ENCODE measurements at regions of chr21 and their contacts with region 1.

Region 1: DNA sequence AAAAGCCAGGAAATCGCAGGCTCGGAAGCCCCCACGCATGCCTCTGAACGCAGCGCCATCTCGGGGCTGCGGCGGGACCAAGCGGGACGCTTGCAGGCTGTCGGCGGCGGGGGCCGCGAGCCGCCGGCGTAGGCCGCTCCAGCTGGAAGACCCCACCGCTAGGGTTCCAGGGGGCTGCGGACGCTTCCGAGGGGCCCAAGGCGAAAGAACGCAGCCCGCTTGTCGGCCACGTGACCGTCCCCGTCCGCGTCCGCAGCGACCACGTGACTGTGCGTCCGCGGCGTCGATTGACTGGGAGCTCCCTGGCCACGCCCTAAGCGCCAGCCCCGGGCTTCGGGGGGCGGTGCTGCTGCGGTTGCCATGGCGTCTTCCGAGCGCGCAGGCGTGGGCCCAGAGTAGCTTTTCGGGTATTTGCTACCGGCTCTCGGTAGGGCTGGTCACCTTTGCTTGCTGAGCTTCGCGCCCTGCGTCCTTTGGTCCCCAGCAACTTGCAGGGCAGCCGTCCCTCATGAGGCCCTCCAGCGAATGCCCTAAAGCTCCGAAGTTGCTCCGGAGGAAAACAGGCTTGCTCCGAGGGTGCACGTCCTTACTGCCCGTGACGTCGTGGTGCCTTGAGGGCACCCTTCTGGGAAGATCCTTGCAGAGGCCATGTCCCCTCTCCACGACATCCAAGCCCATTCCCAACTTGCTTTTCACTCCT is 197.2 kb downstream of the DYRK1A start:
- DNase-seq: peak; percentile 86 to 94 (median 91)
- ATAC-seq: peak; percentile 93
- H3K4me3 ChIP-seq: peak overlapping the region; percentile 99
- H3K4me3 Mint-ChIP-seq: peak overlapping the region; percentile 93 to 100 (median 97)
- H3K27ac ChIP-seq: peak overlapping the region; percentile 82
- H3K27ac Mint-ChIP-seq: peak overlapping the region; percentile 97 to 100 (median 99)
- H3K4me1 ChIP-seq: peaks cover 11 to 17% of the 10 kb centered on the region in 2 donors
- H3K4me1 Mint-ChIP-seq: peaks cover 0 to 32% (median 17%) of the 10 kb centered on the region in 7 donors
- H3K27me3 ChIP-seq: no peaks in the 10 kb centered on the region
- H3K27me3 Mint-ChIP-seq: peaks cover 0 to 8% (median 2%) of the 10 kb centered on the region in 5 donors

Region 2: DNA sequence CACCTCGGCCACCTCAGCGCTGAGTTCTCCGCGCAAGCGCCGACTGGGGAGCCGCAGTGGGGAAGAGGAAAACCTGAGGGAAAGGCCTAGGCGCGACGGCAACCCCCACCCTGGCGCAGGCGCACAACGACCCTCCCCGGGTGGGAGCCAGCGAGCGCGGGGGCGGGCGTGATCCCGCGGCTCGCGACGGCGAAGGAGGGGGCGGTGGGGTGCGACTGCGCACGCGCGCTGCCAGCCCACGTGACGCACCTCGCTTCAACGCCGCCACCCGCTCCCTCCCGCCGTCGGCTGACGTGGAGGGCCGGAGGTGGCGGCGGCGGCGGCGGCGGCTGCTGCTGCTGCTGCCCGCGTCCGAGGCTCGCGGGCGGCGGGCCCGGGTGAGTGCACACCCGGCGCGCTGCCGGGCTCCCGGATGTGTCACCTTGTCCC is 490.8 kb before region 1 on chr21 and contains the starts of genes PIGP and TTC3:
- CTCF ChIA-PET with region 1: no interaction called
- POLR2A ChIA-PET with region 1: interaction called, 6 read pairs
- intact Hi-C with region 1: loop called in 1 of 2 experiments (anchors 1 kb)
- DNase-seq: peak; percentile 93 to 99 (median 97)
- ATAC-seq: peak; percentile 79
- H3K4me3 ChIP-seq: peak within 1 kb of the TSS; percentile 76
- H3K4me3 Mint-ChIP-seq: peak within 1 kb of the TSS; percentile 88 to 100 (median 98)
- H3K27ac ChIP-seq: peak within 1 kb of the TSS; percentile 97
- H3K27ac Mint-ChIP-seq: peak within 1 kb of the TSS; percentile 91 to 100 (median 97)
- H3K4me1 ChIP-seq: peaks cover 22 to 23% of the 10 kb centered on the region in 2 donors
- H3K4me1 Mint-ChIP-seq: peaks cover 30 to 66% (median 59%) of the 10 kb centered on the region in 7 donors
- H3K27me3 ChIP-seq: no peaks in the 10 kb centered on the region
- H3K27me3 Mint-ChIP-seq: peaks cover 0 to 6% (median 0%) of the 10 kb centered on the region in 5 donors
- total RNA-seq, gene PIGP: 9.1 to 26.7 (median 15.3) TPM
- total RNA-seq, gene TTC3: 66.6 to 208 (median 154) TPM

Region 3: GRCh38 chr21:37366482-37367316 is 197.1 kb before region 1 on chr21 and contains the start of gene DYRK1A:
- CTCF ChIA-PET with region 1: no interaction called
- POLR2A ChIA-PET with region 1: interaction called, 17 read pairs
- intact Hi-C with region 1: loop called (anchors 1 kb)
- DNase-seq: peak; percentile 95 to 99 (median 99)
- ATAC-seq: peak; percentile 91
- H3K4me3 ChIP-seq: peak within 1 kb of the TSS; percentile 75
- H3K4me3 Mint-ChIP-seq: peak within 1 kb of the TSS; percentile 93 to 100 (median 100)
- H3K27ac ChIP-seq: peak within 1 kb of the TSS; percentile 99
- H3K27ac Mint-ChIP-seq: peak within 1 kb of the TSS; percentile 98 to 100 (median 100)
- H3K4me1 ChIP-seq: peaks cover 20 to 33% of the 10 kb centered on the region in 2 donors
- H3K4me1 Mint-ChIP-seq: peaks cover 34 to 53% (median 44%) of the 10 kb centered on the region in 7 donors
- H3K27me3 ChIP-seq: no peaks in the 10 kb centered on the region
- H3K27me3 Mint-ChIP-seq: peaks cover 0 to 5% (median 0%) of the 10 kb centered on the region in 5 donors
- total RNA-seq, gene DYRK1A: 86.0 to 142 (median 125) TPM

Region 4: DNA sequence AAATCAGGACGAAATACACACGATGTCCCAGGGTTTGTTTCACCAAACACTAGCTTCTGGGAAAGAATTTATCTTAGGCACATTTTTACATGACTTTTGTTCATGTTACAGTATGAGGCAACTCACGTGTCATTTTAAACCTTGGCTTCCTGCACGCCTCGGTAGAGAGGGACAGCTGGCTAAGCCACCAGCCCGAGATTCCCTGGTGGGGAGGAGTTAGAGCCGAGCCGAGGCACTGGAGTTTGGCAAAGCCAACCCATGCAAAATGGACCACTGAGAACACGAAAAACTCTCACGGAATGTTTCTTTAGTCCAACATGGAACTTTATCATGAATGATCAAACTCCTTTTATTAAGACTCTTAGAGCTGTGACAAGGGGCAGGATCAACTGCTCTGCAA is 42.8 kb after region 1 on chr21:
- CTCF ChIA-PET with region 1: no interaction called
- POLR2A ChIA-PET with region 1: interaction called, 3 read pairs
- intact Hi-C with region 1: loop called in 1 of 2 experiments (anchors 1 kb)
- DNase-seq: no peak
- ATAC-seq: no peak
- H3K4me3 ChIP-seq: no peak overlapping the region
- H3K4me3 Mint-ChIP-seq: no peak overlapping the region
- H3K27ac ChIP-seq: no peak overlapping the region
- H3K27ac Mint-ChIP-seq: no peak overlapping the region
- H3K4me1 ChIP-seq: no peaks in the 10 kb centered on the region
- H3K4me1 Mint-ChIP-seq: no peaks in the 10 kb centered on the region
- H3K27me3 ChIP-seq: no peaks in the 10 kb centered on the region
- H3K27me3 Mint-ChIP-seq: peaks cover 21 to 45% (median 38%) of the 10 kb centered on the region in 5 donors

Region 5: GRCh38 chr21:38244885-38245545 is 681.2 kb after region 1 on chr21:
- CTCF ChIA-PET with region 1: interaction called, 3 read pairs
- POLR2A ChIA-PET with region 1: no interaction called
- intact Hi-C with region 1: loop called in 1 of 2 experiments (anchors 10 kb)
- DNase-seq: peak; percentile 11 to 84 (median 70)
- ATAC-seq: peak; percentile 97
- H3K4me3 ChIP-seq: no peak overlapping the region
- H3K4me3 Mint-ChIP-seq: peak overlapping the region in 8 of 10 donors; percentile 42 to 74 (median 48)
- H3K27ac ChIP-seq: no peak overlapping the region
- H3K27ac Mint-ChIP-seq: peak overlapping the region; percentile 81 to 97 (median 89)
- H3K4me1 ChIP-seq: peaks cover 0 to 19% of the 10 kb centered on the region in 2 donors
- H3K4me1 Mint-ChIP-seq: peaks cover 17 to 43% (median 26%) of the 10 kb centered on the region in 7 donors
- H3K27me3 ChIP-seq: no peaks in the 10 kb centered on the region
- H3K27me3 Mint-ChIP-seq: peaks cover 0 to 17% (median 0%) of the 10 kb centered on the region in 5 donors

Region 6: DNA sequence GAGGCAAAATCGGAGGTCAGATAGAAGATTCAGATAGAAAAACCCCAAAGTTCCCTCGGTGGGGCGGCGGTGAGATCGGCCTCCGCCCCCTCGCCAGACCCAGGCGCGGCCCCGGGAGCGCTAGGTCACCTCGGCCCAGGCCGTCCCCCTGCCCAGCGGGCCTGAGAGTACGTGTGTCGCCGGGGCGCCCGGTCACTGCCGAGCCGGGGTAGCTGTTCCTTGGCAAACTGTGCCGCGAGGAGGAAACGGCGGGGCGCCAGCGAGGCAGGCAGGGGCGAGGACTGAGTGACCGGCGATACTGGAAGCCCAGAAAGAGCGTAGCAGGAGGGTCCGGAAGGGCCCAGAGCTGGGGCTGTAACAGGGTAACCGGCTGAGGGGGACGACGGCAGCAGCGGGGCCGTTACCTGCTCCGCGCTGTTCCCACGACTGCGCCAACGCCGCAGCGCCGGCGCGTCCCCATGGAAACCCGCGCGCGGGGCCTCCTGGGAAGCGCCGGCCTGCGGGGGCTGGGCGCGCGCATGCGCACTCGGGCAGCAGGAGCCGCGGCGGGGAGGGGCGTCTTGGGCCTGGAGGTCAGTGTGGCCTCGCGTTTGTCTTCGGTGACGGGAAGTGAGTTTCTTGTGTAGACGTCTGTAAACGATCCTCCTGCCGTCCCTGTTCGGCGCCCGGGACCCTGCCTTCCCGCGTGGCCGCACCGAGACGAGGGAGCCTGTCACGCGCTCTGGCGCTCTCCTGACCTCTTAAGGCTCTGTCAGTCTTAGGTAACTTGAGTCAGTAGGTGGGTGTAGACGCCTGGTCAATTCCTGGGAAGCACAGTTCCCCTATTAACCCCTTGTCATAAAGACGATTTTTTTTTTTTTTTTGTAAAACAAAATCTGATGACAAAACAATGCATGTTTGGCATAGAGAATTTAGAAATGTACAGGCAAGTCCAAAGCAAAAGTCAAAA is 1881.8 kb after region 1 on chr21 and contains the start of gene LCA5L:
- CTCF ChIA-PET with region 1: no interaction called
- POLR2A ChIA-PET with region 1: no interaction called
- intact Hi-C with region 1: loop called in 1 of 2 experiments (anchors 5 kb)
- DNase-seq: peak; percentile 80 to 96 (median 90)
- ATAC-seq: peak; percentile 93
- H3K4me3 ChIP-seq: peak within 1 kb of the TSS; percentile 83
- H3K4me3 Mint-ChIP-seq: peak within 1 kb of the TSS; percentile 91 to 99 (median 94)
- H3K27ac ChIP-seq: peak within 1 kb of the TSS; percentile 76
- H3K27ac Mint-ChIP-seq: peak within 1 kb of the TSS; percentile 86 to 98 (median 94)
- H3K4me1 ChIP-seq: peaks cover 11 to 13% of the 10 kb centered on the region in 2 donors
- H3K4me1 Mint-ChIP-seq: peaks cover 8 to 26% (median 14%) of the 10 kb centered on the region in 7 donors
- H3K27me3 ChIP-seq: peaks cover 0 to 2% of the 10 kb centered on the region in 2 donors
- H3K27me3 Mint-ChIP-seq: peaks cover 0 to 44% (median 14%) of the 10 kb centered on the region in 5 donors
- total RNA-seq, gene LCA5L: not detected

Measured in naive thymus-derived CD4-positive, alpha-beta T cell (primary cell).